ENCODE measurements at regions of chr2 and their contacts with region 1.

Region 1: DNA sequence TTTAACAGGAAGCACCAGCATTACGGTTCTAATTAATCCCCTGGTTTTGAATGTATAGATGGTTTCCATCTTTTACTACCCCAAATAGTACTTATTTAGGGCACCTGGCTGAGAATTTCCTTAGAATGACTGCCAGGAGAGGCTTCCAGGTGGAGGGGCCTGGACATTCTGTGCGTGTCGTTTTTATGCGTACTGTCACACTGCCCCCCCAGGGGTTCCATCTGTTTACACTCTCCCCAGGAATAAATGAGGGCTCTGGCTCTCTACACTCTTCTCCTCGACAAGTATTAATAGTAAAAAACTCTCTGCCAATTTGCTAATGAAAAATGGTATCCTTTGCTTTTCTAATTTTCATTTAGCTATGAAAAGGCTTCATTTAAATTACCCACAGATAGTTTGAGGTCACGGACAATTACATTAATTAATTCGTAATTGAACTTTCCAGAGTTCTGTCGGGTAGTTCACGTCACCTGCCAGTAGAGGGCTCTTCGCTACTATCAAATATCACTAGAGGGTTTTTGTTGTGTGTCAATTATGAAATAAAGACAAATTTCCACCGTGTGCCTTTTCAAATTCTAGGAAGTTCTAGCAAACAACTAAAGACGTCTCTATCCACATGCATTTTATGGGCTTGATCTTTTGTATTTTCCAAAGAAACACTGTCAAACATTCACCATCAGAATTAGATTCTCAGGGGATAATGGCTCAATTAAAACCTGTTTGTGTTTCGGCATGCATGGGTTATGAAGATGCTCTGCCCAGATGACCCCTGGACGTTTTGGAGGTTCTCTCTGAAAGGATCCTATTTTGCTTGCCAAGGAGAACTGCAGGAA is 88.8 kb upstream of the ASB18 start:
- DNase-seq: peak; percentile 8
- ATAC-seq: peak; percentile 58
- H3K4me3 ChIP-seq: no peak overlapping the region
- H3K27ac ChIP-seq: no peak overlapping the region
- H3K4me1 ChIP-seq: no peaks in the 10 kb centered on the region
- H3K27me3 ChIP-seq: no peaks in the 10 kb centered on the region
- CTCF ChIP-seq: peak; percentile 70 to 92 (median 73)
- POLR2A ChIP-seq: no peak
- RAD21 ChIP-seq: peak; percentile 79

Region 2: GRCh38 chr2:236180831-236181453 is 172.0 kb before region 1 on chr2:
- CTCF ChIA-PET with region 1: no interaction called
- POLR2A ChIA-PET with region 1: no interaction called
- RAD21 ChIA-PET with region 1: no interaction called
- intact Hi-C with region 1: no loop called
- DNase-seq: peak; percentile 42
- ATAC-seq: peak; percentile 41
- H3K4me3 ChIP-seq: no peak overlapping the region
- H3K27ac ChIP-seq: no peak overlapping the region
- H3K4me1 ChIP-seq: peaks cover 2 to 38% of the 10 kb centered on the region in 2 experiments; a peak in 3 of 4 replicates
- H3K27me3 ChIP-seq: no peaks in the 10 kb centered on the region
- CTCF ChIP-seq: peak; percentile 62 to 81 (median 76)
- POLR2A ChIP-seq: no peak
- RAD21 ChIP-seq: peak; percentile 87

Region 3: DNA sequence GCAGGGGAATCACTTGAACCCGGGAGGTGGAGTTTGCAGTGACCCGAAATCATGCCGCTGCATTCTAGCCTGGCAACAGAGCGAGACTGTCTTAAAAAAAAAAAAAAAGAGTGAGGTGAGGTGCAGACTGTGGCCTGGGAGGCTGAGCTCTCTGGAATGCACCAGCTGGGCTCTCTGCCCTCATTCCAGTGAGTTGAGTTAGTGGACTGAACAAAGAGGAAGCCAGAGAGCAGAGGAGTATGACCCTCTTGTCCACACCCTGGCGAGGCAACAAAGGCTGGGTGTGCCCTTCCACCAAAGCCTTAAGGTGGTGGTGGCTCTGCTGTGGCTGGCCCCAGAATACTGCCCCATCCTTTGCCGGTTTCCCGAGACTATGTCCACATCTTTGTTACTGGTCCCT is 145.4 kb after region 1 on chr2:
- CTCF ChIA-PET with region 1: no interaction called
- POLR2A ChIA-PET with region 1: no interaction called
- RAD21 ChIA-PET with region 1: no interaction called
- intact Hi-C with region 1: no loop called
- DNase-seq: no peak
- ATAC-seq: no peak; the same call in 1 of the 2 replicates
- H3K4me3 ChIP-seq: no peak overlapping the region
- H3K27ac ChIP-seq: no peak overlapping the region
- H3K4me1 ChIP-seq: no peaks in the 10 kb centered on the region
- H3K27me3 ChIP-seq: peaks cover 15% of the 10 kb centered on the region
- CTCF ChIP-seq: no peak
- POLR2A ChIP-seq: no peak
- RAD21 ChIP-seq: no peak

Region 4: GRCh38 chr2:236749346-236749745 is 396.4 kb after region 1 on chr2:
- CTCF ChIA-PET with region 1: no interaction called
- POLR2A ChIA-PET with region 1: no interaction called
- RAD21 ChIA-PET with region 1: no interaction called
- intact Hi-C with region 1: no loop called
- DNase-seq: no peak
- ATAC-seq: no peak
- H3K4me3 ChIP-seq: no peak overlapping the region
- H3K27ac ChIP-seq: no peak overlapping the region
- H3K4me1 ChIP-seq: no peaks in the 10 kb centered on the region
- H3K27me3 ChIP-seq: peaks cover 64% of the 10 kb centered on the region
- CTCF ChIP-seq: no peak
- POLR2A ChIP-seq: no peak
- RAD21 ChIP-seq: no peak

Region 5: GRCh38 chr2:237026981-237027711 is 674.2 kb after region 1 on chr2:
- CTCF ChIA-PET with region 1: no interaction called
- POLR2A ChIA-PET with region 1: no interaction called
- RAD21 ChIA-PET with region 1: no interaction called
- intact Hi-C with region 1: loop called (anchors 1 kb)
- DNase-seq: peak; percentile 29
- ATAC-seq: peak; percentile 94
- H3K4me3 ChIP-seq: no peak overlapping the region
- H3K27ac ChIP-seq: no peak overlapping the region
- H3K4me1 ChIP-seq: peaks cover 0 to 14% of the 10 kb centered on the region in 2 experiments; a peak in 2 of 4 replicates
- H3K27me3 ChIP-seq: no peaks in the 10 kb centered on the region
- CTCF ChIP-seq: peak; percentile 74 to 83 (median 80); a peak in 5 of 6 replicates
- POLR2A ChIP-seq: no peak
- RAD21 ChIP-seq: peak; percentile 89